WTC11 (cell line): ENCODE measurements at regions of chr20 and their contacts with region 1.

Region 1: GRCh38 chr20:5788385-5788895 is 38.2 kb downstream of the SHLD1 start:
- DNase-seq: peak; percentile 67
- ATAC-seq: peak; percentile 96
- H3K4me3 Mint-ChIP-seq: no peak overlapping the region
- H3K27ac Mint-ChIP-seq: no peak overlapping the region
- H3K4me1 Mint-ChIP-seq: peaks cover 9% of the 10 kb centered on the region
- H3K27me3 Mint-ChIP-seq: no peaks in the 10 kb centered on the region
- CTCF ChIP-seq: peak; percentile 82

Region 2: DNA sequence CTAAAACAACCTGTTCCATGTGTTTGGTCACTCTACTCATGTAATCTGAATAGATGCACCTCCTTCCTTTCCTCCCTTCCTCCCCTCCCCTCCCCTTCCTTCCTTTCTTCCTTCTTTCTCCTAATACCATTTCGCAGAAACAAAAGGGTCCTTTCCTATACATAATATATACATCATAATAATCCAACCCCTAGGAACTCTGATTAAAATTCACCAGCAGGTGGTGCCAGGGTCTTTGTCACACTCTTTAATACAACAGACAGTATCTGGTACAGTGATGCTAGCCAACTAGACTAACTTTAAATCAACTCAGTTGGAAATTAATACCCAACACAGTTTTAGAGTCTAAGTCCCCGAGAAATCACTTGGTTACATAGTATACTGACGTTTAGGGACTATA is 219.4 kb before region 1 on chr20:
- CTCF ChIA-PET with region 1: interaction called, 10 read pairs
- POLR2A ChIA-PET with region 1: no interaction called
- DNase-seq: no peak
- ATAC-seq: no peak
- H3K4me3 Mint-ChIP-seq: no peak overlapping the region
- H3K27ac Mint-ChIP-seq: no peak overlapping the region
- H3K4me1 Mint-ChIP-seq: peaks cover 8% of the 10 kb centered on the region
- H3K27me3 Mint-ChIP-seq: no peaks in the 10 kb centered on the region
- CTCF ChIP-seq: no peak

Region 3: DNA sequence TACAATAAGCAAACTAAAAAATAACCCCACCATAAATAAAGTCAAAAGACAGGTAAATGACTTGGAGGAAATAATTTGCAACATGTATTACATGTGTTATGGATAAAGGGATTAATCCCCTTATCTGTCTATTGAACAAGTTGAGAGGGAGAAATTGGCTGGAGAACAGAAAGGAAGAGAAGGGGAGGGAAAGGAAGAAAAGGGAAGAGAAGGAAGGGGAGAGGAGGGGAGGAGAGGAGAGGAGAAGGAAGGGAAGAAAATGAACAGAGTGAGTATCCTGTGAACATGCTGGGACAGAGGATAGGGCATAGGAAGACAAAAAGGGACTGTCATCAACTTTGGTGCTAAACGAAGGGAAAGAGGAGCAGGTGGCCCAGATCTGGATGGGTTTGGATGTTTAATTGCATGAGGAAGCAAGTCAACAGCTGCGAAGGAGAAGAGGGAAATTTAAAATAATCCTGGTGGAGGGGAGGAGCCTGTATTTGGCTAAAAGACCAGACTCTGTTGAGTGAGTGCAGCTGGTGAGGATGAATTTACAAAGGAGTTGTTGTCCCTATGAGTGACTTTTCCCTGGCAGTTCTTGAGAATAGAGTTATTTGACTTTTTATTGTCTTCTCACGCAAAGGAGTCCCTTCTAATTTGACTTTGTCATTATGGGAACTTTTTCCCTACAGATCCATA is 52.5 kb before region 1 on chr20:
- CTCF ChIA-PET with region 1: no interaction called
- POLR2A ChIA-PET with region 1: no interaction called
- DNase-seq: no peak
- ATAC-seq: no peak
- H3K4me3 Mint-ChIP-seq: no peak overlapping the region
- H3K27ac Mint-ChIP-seq: no peak overlapping the region
- H3K4me1 Mint-ChIP-seq: no peaks in the 10 kb centered on the region; the same call in 1 of the 2 replicates
- H3K27me3 Mint-ChIP-seq: peaks cover 3% of the 10 kb centered on the region; the same call in 1 of the 2 replicates
- CTCF ChIP-seq: no peak